T-cell (primary cell): ENCODE measurements at regions of chr7 and their contacts with region 1.

Region 1: DNA sequence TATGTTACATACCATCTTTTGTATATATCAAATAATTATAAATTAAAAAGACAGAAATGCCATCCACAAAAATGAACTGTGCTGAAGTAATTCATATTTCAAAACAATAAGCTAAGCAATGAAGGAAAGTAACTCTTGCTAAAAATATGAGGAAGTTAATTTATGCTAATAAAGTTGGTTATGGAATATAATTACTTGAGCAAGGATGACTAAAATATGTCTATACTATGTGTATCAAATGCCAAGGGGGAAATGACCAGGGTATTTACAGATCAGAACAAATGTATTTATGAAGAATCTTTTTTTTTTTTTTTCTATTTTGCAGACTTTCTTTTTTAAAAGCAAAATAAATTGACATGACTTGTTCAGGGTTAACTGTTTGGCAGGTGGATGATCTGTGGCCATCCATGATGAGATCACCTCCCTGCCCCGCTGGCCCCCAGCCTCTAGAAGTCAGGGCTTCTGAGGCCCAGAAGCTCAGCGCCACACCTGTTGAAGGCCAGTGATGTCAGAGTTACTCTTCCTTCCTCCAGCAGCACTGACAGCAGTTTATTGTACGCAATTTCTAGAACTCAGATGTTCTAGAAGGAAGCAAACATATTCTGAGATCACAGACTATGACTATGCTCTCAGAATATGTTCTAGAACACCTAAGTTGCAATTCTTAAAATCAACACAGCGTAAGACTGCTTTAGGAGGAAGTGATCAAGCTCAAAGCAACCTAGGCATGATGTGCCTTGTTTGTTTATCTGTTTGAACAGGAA is 196.1 kb upstream of the KLF14 start:
- DNase-seq: peak in 21 of 35 experiments; percentile 21 to 64 (median 33)
- ATAC-seq: peak; percentile 32 to 53 (median 47)
- H3K4me3 ChIP-seq: no peak overlapping the region
- H3K4me3 Mint-ChIP-seq: peak overlapping the region in 2 of 3 donors; percentile 45 to 54
- H3K27ac ChIP-seq: peak overlapping the region; percentile 47
- H3K27ac Mint-ChIP-seq: peak overlapping the region; percentile 87 to 95
- H3K4me1 ChIP-seq: peaks cover 4 to 61% of the 10 kb centered on the region in 2 experiments
- H3K4me1 Mint-ChIP-seq: peaks cover 92 to 96% (median 95%) of the 10 kb centered on the region in 3 donors
- H3K27me3 ChIP-seq: no peaks in the 10 kb centered on the region
- H3K27me3 Mint-ChIP-seq: no peaks in the 10 kb centered on the region

Region 2: DNA sequence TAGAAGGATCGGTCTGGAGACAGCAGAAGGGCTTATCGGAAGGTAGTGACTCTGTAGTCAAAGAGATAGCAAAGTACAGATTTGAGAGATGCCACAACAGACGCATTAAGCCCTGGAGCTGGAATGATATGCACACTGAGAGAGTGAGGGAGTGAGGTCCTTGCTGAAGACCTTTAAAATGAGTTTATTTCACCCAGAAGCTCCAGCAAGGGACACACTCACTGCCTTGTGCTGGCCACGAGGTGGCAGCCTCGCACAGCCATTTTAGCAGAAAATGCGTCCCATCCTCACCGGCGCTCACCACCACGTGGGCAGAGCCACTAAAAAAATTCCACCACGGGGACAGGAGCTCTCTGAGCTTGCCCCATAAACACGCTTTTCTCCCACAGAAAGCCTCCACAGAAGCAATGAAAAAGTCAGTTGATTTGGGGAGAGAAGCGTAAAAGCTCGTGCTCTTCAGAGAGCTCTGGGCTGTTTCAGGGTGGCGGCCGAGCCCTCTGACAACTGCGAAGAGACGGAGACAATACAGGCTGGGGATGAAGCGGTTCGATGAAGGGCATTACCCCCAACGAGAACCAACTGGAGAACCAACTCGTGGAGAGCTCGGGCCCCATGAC is 33.1 kb before region 1 on chr7:
- CTCF ChIA-PET with region 1: interaction called in 1 of 2 experiments, 21 read pairs
- POLR2A ChIA-PET with region 1: interaction called in 1 of 2 experiments, 3 read pairs
- DNase-seq: peak; percentile 30 to 89 (median 70)
- ATAC-seq: peak; percentile 68 to 79 (median 76)
- H3K4me3 ChIP-seq: no peak overlapping the region
- H3K4me3 Mint-ChIP-seq: peak overlapping the region in 1 of 3 donors; percentile 48
- H3K27ac ChIP-seq: peak overlapping the region; percentile 19
- H3K27ac Mint-ChIP-seq: peak overlapping the region; percentile 78 to 89
- H3K4me1 ChIP-seq: peaks cover 3 to 61% of the 10 kb centered on the region in 2 experiments
- H3K4me1 Mint-ChIP-seq: peaks cover 70 to 92% (median 85%) of the 10 kb centered on the region in 3 donors
- H3K27me3 ChIP-seq: no peaks in the 10 kb centered on the region
- H3K27me3 Mint-ChIP-seq: no peaks in the 10 kb centered on the region

Region 3: GRCh38 chr7:130912862-130913631 is 17.0 kb before region 1 on chr7:
- CTCF ChIA-PET with region 1: interaction called, 4 to 8 read pairs
- POLR2A ChIA-PET with region 1: interaction called, 5 to 26 read pairs
- DNase-seq: peak; percentile 25 to 90 (median 77)
- ATAC-seq: peak; percentile 89 to 94 (median 92)
- H3K4me3 ChIP-seq: peak overlapping the region; percentile 58 to 96
- H3K4me3 Mint-ChIP-seq: peak overlapping the region; percentile 82 to 86 (median 86)
- H3K27ac ChIP-seq: peak overlapping the region; percentile 89
- H3K27ac Mint-ChIP-seq: peak overlapping the region; percentile 90
- H3K4me1 ChIP-seq: peaks cover 22 to 60% of the 10 kb centered on the region in 2 experiments
- H3K4me1 Mint-ChIP-seq: peaks cover 92 to 93% (median 93%) of the 10 kb centered on the region in 3 donors
- H3K27me3 ChIP-seq: no peaks in the 10 kb centered on the region
- H3K27me3 Mint-ChIP-seq: no peaks in the 10 kb centered on the region

Region 4: GRCh38 chr7:130941322-130942210 is 11.5 kb after region 1 on chr7:
- CTCF ChIA-PET with region 1: interaction called, 3 to 6 read pairs
- POLR2A ChIA-PET with region 1: interaction called, 8 to 33 read pairs
- DNase-seq: peak in 18 of 35 experiments; percentile 24 to 67 (median 34)
- ATAC-seq: peak in 2 of 4 experiments; percentile 15 to 29
- H3K4me3 ChIP-seq: peak overlapping the region in 1 of 2 donors; percentile 53
- H3K4me3 Mint-ChIP-seq: peak overlapping the region; percentile 84 to 87 (median 84)
- H3K27ac ChIP-seq: peak overlapping the region; percentile 90
- H3K27ac Mint-ChIP-seq: peak overlapping the region; percentile 96 to 97
- H3K4me1 ChIP-seq: peaks cover 0 to 56% of the 10 kb centered on the region in 2 experiments
- H3K4me1 Mint-ChIP-seq: peaks cover 91 to 97% (median 92%) of the 10 kb centered on the region in 3 donors
- H3K27me3 ChIP-seq: no peaks in the 10 kb centered on the region
- H3K27me3 Mint-ChIP-seq: no peaks in the 10 kb centered on the region

Region 5: GRCh38 chr7:130951303-130951975 is 21.4 kb after region 1 on chr7:
- CTCF ChIA-PET with region 1: interaction called in 1 of 2 experiments, 6 read pairs
- POLR2A ChIA-PET with region 1: interaction called, 8 to 10 read pairs
- DNase-seq: peak in 5 of 35 experiments; percentile 21 to 78 (median 32)
- ATAC-seq: peak in 3 of 4 experiments; percentile 15 to 56 (median 34)
- H3K4me3 ChIP-seq: no peak overlapping the region
- H3K4me3 Mint-ChIP-seq: no peak overlapping the region
- H3K27ac ChIP-seq: peak overlapping the region; percentile 97
- H3K27ac Mint-ChIP-seq: no peak overlapping the region
- H3K4me1 ChIP-seq: peaks cover 0 to 55% of the 10 kb centered on the region in 2 experiments
- H3K4me1 Mint-ChIP-seq: peaks cover 21 to 66% (median 58%) of the 10 kb centered on the region in 3 donors
- H3K27me3 ChIP-seq: no peaks in the 10 kb centered on the region
- H3K27me3 Mint-ChIP-seq: no peaks in the 10 kb centered on the region

Region 6: DNA sequence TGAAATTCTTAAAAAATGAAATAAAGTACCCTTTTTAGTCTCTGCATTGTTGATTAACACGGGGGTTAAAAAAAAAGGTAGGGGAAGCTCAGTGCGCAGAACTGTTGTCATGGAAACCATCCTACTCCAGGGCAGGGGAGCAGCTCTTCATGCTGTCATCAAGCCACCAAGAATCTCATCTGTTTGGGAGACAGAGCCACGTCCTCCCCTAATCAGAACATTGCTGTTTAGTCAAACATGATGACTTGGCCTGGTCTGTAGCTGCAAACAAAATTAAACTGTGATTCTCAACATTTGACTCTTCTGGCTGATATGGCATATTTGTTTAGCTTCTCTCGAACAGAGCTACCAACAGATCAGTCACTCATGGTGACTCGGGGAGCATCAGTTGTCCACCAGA is 58.4 kb after region 1 on chr7:
- CTCF ChIA-PET with region 1: no interaction called
- POLR2A ChIA-PET with region 1: interaction called in 1 of 2 experiments, 12 read pairs
- DNase-seq: peak in 13 of 35 experiments; percentile 17 to 69 (median 40)
- ATAC-seq: peak in 3 of 4 experiments; percentile 12 to 49 (median 21)
- H3K4me3 ChIP-seq: no peak overlapping the region
- H3K4me3 Mint-ChIP-seq: peak overlapping the region in 2 of 3 donors; percentile 9 to 39
- H3K27ac ChIP-seq: peak overlapping the region; percentile 91
- H3K27ac Mint-ChIP-seq: peak overlapping the region; percentile 86 to 95
- H3K4me1 ChIP-seq: peaks cover 0 to 78% of the 10 kb centered on the region in 2 experiments
- H3K4me1 Mint-ChIP-seq: peaks cover 75 to 92% (median 90%) of the 10 kb centered on the region in 3 donors
- H3K27me3 ChIP-seq: no peaks in the 10 kb centered on the region
- H3K27me3 Mint-ChIP-seq: no peaks in the 10 kb centered on the region

Region 7: GRCh38 chr7:131293018-131293417 is 362.9 kb after region 1 on chr7:
- CTCF ChIA-PET with region 1: no interaction called
- POLR2A ChIA-PET with region 1: interaction called in 1 of 2 experiments, 11 read pairs
- DNase-seq: no peak
- ATAC-seq: no peak
- H3K4me3 ChIP-seq: no peak overlapping the region
- H3K4me3 Mint-ChIP-seq: no peak overlapping the region
- H3K27ac ChIP-seq: no peak overlapping the region
- H3K27ac Mint-ChIP-seq: no peak overlapping the region
- H3K4me1 ChIP-seq: no peaks in the 10 kb centered on the region
- H3K4me1 Mint-ChIP-seq: no peaks in the 10 kb centered on the region
- H3K27me3 ChIP-seq: no peaks in the 10 kb centered on the region
- H3K27me3 Mint-ChIP-seq: peaks cover 0 to 1% of the 10 kb centered on the region in 2 donors

Region 8: DNA sequence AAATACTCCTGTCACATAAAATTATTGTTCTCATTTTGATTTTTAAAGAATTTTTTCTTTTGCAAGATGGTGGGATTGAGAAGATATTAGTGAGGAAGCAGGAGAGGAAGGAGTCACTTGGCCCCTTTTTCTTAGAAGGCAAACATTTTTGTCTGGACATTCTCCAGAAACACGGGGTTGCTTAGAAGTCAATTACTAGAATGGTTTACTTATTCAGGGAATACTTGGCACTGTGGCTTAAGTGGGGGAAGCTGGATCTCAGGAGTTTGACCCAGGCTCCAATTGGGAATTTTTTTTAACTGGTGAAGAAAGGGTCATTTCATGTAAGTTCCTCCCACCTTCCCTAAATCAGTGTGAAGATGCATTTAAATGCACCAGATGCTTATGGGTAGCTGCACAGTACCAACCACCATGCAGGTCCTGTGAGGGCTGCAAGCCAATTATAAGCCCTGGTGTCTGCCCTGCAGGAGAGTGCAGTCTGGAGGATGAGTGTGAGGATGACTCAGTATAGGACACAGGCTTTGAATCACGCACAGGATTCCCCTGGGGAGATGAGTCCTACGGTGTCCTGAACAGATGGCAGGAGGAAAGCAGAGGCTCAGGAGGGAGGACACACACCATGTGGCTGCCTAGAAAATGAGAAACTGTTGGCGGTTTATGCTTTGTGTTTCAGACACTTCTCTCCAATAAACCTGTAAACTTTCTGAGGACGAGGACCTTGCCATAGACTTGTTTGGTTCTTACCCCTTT is 1347.1 kb after region 1 on chr7:
- CTCF ChIA-PET with region 1: no interaction called
- POLR2A ChIA-PET with region 1: no interaction called
- DNase-seq: no peak
- ATAC-seq: no peak
- H3K4me3 ChIP-seq: no peak overlapping the region
- H3K4me3 Mint-ChIP-seq: no peak overlapping the region
- H3K27ac ChIP-seq: no peak overlapping the region
- H3K27ac Mint-ChIP-seq: no peak overlapping the region
- H3K4me1 ChIP-seq: no peaks in the 10 kb centered on the region
- H3K4me1 Mint-ChIP-seq: no peaks in the 10 kb centered on the region
- H3K27me3 ChIP-seq: peaks cover 0 to 8% of the 10 kb centered on the region in 2 experiments
- H3K27me3 Mint-ChIP-seq: peaks cover 15 to 16% of the 10 kb centered on the region in 2 donors